ENCODE measurements at regions of chr5 and their contacts with region 1.

Region 1: GRCh38 chr5:149656576-149657182 is 73.4 kb upstream of the PPARGC1B start:
- DNase-seq: peak; percentile 93
- ATAC-seq: peak; percentile 89
- H3K4me3 Mint-ChIP-seq: no peak overlapping the region
- H3K27ac Mint-ChIP-seq: no peak overlapping the region
- H3K4me1 Mint-ChIP-seq: peaks cover 16% of the 10 kb centered on the region
- H3K27me3 Mint-ChIP-seq: no peaks in the 10 kb centered on the region
- CTCF ChIP-seq: peak; percentile 90

Region 2: GRCh38 chr5:148730943-148731861 is 925.5 kb before region 1 on chr5:
- CTCF ChIA-PET with region 1: no interaction called
- POLR2A ChIA-PET with region 1: no interaction called
- DNase-seq: peak; percentile 59
- ATAC-seq: peak; percentile 77
- H3K4me3 Mint-ChIP-seq: no peak overlapping the region
- H3K27ac Mint-ChIP-seq: no peak overlapping the region
- H3K4me1 Mint-ChIP-seq: peaks cover 18% of the 10 kb centered on the region
- H3K27me3 Mint-ChIP-seq: no peaks in the 10 kb centered on the region
- CTCF ChIP-seq: peak; percentile 64

Region 3: GRCh38 chr5:149636851-149637246 is 19.8 kb before region 1 on chr5:
- CTCF ChIA-PET with region 1: interaction called, 11 read pairs
- POLR2A ChIA-PET with region 1: no interaction called
- DNase-seq: peak; percentile 50
- ATAC-seq: peak; percentile 78
- H3K4me3 Mint-ChIP-seq: no peak overlapping the region
- H3K27ac Mint-ChIP-seq: no peak overlapping the region
- H3K4me1 Mint-ChIP-seq: peaks cover 24% of the 10 kb centered on the region
- H3K27me3 Mint-ChIP-seq: no peaks in the 10 kb centered on the region
- CTCF ChIP-seq: peak; percentile 59; the same call in 1 of the 2 replicates

Region 4: DNA sequence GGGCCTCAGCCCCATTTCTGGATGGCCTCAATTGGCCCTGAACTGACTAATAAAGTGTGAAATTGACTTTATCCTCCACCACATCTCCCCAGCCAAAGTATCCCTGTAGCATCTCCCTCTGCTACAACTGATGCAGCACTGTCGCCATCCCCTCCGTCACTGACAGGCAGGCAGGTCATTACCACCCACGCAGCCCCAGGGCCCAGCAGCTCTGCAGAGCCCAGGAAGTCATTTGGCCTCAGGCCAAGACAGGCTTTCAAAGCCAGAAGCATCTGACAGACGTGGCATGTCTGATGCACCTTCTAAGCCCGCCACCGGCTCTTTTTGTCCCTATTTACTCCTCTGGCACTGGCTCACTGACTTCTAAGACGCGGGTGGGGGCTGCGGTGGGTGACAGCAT is 10.1 kb before region 1 on chr5:
- CTCF ChIA-PET with region 1: interaction called, 12 read pairs
- POLR2A ChIA-PET with region 1: no interaction called
- DNase-seq: no peak
- ATAC-seq: no peak
- H3K4me3 Mint-ChIP-seq: no peak overlapping the region
- H3K27ac Mint-ChIP-seq: no peak overlapping the region
- H3K4me1 Mint-ChIP-seq: peaks cover 4% of the 10 kb centered on the region; the same call in 1 of the 2 replicates
- H3K27me3 Mint-ChIP-seq: no peaks in the 10 kb centered on the region
- CTCF ChIP-seq: no peak

Region 5: GRCh38 chr5:149680810-149681221 is 24.1 kb after region 1 on chr5:
- CTCF ChIA-PET with region 1: interaction called, 11 read pairs
- POLR2A ChIA-PET with region 1: no interaction called
- DNase-seq: no peak
- ATAC-seq: no peak
- H3K4me3 Mint-ChIP-seq: no peak overlapping the region
- H3K27ac Mint-ChIP-seq: no peak overlapping the region
- H3K4me1 Mint-ChIP-seq: no peaks in the 10 kb centered on the region
- H3K27me3 Mint-ChIP-seq: peaks cover 2% of the 10 kb centered on the region
- CTCF ChIP-seq: no peak

Region 6: GRCh38 chr5:149828161-149828884 is 171.6 kb after region 1 on chr5:
- CTCF ChIA-PET with region 1: interaction called, 23 read pairs
- POLR2A ChIA-PET with region 1: interaction called, 3 read pairs
- DNase-seq: peak; percentile 90
- ATAC-seq: peak; percentile 94
- H3K4me3 Mint-ChIP-seq: no peak overlapping the region
- H3K27ac Mint-ChIP-seq: peak overlapping the region; percentile 67
- H3K4me1 Mint-ChIP-seq: peaks cover 5% of the 10 kb centered on the region
- H3K27me3 Mint-ChIP-seq: no peaks in the 10 kb centered on the region
- CTCF ChIP-seq: peak; percentile 68

Measured in WTC11 (cell line).